Breast epithelium (tissue), 4 donors: ENCODE measurements at regions of chr2 and their contacts with region 1.

Region 1: DNA sequence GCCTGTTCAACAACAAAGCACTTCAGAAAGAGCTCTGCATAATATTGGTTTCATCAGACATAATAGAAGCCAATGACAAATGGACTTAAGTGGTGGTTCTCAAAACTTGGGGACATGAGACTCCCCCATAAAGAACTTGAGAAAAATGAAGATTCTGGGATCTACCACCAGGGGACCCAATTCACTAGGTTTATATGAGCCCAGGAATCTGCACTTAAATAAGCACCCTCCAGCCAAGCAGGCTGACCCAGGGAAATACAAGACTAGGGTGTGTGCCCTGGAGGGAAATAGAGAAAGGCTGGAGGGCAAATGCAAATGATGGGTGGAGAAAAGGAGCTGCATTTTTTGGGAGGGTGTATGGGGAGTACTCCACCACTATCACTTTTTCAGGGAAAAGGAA is 52.5 kb downstream of the SATB2 start:
- DNase-seq: no peak
- H3K4me3 ChIP-seq: no peak overlapping the region
- H3K27ac ChIP-seq: no peak overlapping the region
- H3K4me1 ChIP-seq: no peaks in the 10 kb centered on the region
- H3K27me3 ChIP-seq: no peaks in the 10 kb centered on the region
- CTCF ChIP-seq: no peak
- POLR2A ChIP-seq: no peak

Region 2: DNA sequence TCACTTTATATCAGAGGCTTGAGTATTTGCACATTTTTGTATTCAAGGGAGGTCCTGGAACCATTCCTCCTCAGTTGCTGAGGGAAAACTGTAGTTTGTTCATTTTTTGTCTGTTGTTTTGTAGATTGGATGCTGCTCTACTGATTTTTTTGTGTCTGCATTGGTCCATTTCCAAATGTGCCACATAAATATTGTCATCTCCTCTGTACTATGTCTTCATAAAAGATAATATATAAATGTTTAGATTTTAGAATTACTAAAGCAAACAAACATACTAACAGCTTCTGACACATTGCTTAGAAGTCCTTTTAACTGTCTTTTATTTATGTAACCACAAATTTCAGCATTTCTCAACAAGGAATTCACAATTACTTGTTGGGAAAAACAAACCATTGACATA is 1244.1 kb before region 1 on chr2:
- intact Hi-C with region 1: no loop called
- DNase-seq: no peak
- H3K4me3 ChIP-seq: no peak overlapping the region
- H3K27ac ChIP-seq: no peak overlapping the region
- H3K4me1 ChIP-seq: no peaks in the 10 kb centered on the region
- H3K27me3 ChIP-seq: no peaks in the 10 kb centered on the region
- CTCF ChIP-seq: no peak
- POLR2A ChIP-seq: no peak

Region 3: DNA sequence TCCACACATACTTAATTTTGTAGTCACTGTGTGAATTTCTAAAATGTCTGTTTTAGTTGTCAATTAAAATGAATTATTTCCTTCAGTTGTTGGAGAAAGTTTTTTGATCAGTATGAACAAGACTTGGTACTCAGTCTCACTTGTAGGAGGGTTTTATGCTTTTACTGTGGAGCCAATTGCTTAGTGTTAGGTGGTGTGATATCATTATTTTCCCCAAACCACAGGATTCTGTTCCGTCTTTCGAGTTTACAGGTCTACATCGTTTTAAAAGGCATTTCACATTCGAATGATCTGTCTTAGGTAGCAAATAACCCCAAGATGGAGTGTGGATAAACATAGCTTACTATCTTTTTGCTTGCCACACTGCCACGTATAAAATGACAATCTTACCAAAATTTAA is 750.6 kb before region 1 on chr2:
- intact Hi-C with region 1: loop called (anchors 5 kb)
- DNase-seq: no peak
- H3K4me3 ChIP-seq: no peak overlapping the region
- H3K27ac ChIP-seq: no peak overlapping the region
- H3K4me1 ChIP-seq: no peaks in the 10 kb centered on the region
- H3K27me3 ChIP-seq: no peaks in the 10 kb centered on the region
- CTCF ChIP-seq: no peak
- POLR2A ChIP-seq: no peak

Region 4: GRCh38 chr2:199147216-199147615 is 258.0 kb before region 1 on chr2:
- intact Hi-C with region 1: no loop called
- DNase-seq: no peak
- H3K4me3 ChIP-seq: no peak overlapping the region
- H3K27ac ChIP-seq: no peak overlapping the region
- H3K4me1 ChIP-seq: no peaks in the 10 kb centered on the region
- H3K27me3 ChIP-seq: no peaks in the 10 kb centered on the region
- CTCF ChIP-seq: no peak
- POLR2A ChIP-seq: no peak

Region 5: DNA sequence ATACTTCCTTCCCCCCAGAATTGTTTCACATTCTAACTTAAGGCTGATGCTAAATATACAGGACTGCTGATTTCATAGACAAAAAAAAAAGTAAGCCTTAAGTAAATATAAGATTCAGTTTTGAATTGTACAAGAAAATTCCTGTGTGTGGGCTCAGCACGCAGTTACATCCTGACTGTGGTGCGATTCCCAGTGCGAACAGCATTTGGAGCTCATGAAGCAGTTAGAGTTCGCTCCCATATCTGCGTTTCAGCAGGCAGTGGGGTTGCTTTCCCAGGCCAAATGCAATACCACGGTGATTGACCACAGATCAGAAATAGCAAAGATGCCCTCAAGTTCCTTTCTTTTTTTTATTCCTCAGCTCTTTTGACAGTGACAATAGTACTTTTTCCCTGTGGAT is 23.1 kb before region 1 on chr2:
- intact Hi-C with region 1: loop called (anchors 1 kb)
- DNase-seq: no peak
- H3K4me3 ChIP-seq: no peak overlapping the region
- H3K27ac ChIP-seq: no peak overlapping the region
- H3K4me1 ChIP-seq: no peaks in the 10 kb centered on the region
- H3K27me3 ChIP-seq: no peaks in the 10 kb centered on the region
- CTCF ChIP-seq: no peak
- POLR2A ChIP-seq: no peak

Region 6: DNA sequence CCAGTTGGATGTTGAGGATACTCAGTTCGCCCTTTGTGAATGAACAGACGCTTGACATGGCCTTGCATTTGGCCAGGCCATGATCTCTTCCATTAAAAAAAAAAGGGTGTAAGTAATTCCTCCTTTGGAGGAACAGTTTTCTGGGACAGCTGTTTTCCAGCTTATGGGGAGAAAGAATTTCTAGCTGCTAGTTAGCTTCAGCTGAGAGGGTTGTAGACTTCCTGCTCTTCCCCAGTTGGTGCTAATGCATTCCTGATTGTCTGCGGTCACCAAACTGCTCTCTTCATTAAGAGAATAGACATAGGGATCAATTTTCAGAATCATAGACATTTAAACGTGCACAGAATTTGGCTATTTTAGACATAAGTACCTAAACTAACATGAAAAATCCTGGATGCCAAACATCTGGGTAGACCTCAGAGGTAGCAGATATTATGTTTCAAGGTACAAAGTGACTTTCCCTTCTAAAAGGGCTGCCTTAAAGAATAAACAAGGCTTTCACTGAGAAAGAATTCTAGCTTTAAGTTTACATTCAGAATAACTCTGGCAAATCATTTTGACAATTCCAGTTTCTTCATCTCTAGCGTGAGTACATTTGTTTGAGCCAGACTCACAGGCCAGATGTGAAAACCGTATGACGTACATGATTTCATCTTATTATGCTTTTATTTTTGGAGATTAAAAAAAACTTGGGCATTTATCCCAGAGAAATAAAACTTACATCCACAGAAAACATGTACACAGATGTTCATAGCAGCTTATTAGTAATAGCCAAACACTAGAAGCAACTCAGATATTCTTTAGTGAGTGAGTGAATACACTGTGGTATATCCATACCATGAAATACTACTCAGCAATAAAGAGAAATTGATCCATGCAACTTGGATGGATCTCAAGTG is 621.3 kb after region 1 on chr2:
- intact Hi-C with region 1: loop called (anchors 10 kb)
- DNase-seq: no peak
- H3K4me3 ChIP-seq: no peak overlapping the region
- H3K27ac ChIP-seq: peak overlapping the region; percentile 30 to 62
- H3K4me1 ChIP-seq: no peaks in the 10 kb centered on the region
- H3K27me3 ChIP-seq: no peaks in the 10 kb centered on the region
- CTCF ChIP-seq: no peak
- POLR2A ChIP-seq: no peak